Activated T-helper 2 cell treated with anti-CD3 and anti-CD28 coated beads, Interferon-gamma antibody, Interleukin-2, Interleukin-4, amounts not matched to agents 10 μg/mL and 5 μg/mL and 100 μg/mL, durations not matched to agents 14 hours and 24 hours and 36 hours (primary cell): ENCODE measurements at regions of chrX and their contacts with region 1.

Region 1: GRCh38 chrX:57286507-57287251 is at the start of gene FAAH2:
- DNase-seq: peak; percentile 20
- H3K4me3 Mint-ChIP-seq: peak within 1 kb of the TSS; percentile 83
- H3K27ac Mint-ChIP-seq: peak within 1 kb of the TSS; percentile 82
- H3K4me1 Mint-ChIP-seq: peaks cover 39% of the 10 kb centered on the region
- H3K27me3 Mint-ChIP-seq: no peaks in the 10 kb centered on the region
- total RNA-seq, gene FAAH2: 2.7 and 2.9 TPM in 2 replicates

Region 2: DNA sequence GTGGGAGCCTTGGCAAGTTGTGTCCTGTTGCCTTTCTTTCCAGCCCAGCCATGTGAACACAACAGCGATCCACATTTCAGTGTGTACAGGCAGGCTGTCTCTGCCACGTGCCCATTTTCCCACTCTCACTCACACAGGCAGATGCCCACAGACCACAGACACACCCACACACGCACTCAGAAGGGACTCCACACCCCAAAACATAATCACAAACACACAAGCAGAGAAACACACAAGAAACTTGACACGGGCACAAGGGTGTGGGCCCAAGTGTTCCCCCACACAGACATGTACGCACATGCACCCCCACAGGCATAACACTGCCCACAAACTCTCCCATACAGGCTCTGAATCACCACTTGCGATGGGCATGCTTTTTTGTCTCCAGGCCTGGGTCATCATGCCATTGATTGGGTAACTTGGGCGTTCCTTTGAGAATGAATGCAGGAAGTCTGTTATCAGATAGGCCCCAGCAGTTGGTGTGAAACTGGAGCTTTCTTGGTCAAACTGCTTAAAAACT is 473.3 kb before region 1 on chrX:
- intact Hi-C with region 1: loop called (anchors 2 kb)
- DNase-seq: peak; percentile 53
- H3K4me3 Mint-ChIP-seq: peak overlapping the region; percentile 75
- H3K27ac Mint-ChIP-seq: peak overlapping the region; percentile 96
- H3K4me1 Mint-ChIP-seq: peaks cover 29% of the 10 kb centered on the region
- H3K27me3 Mint-ChIP-seq: no peaks in the 10 kb centered on the region

Region 3: DNA sequence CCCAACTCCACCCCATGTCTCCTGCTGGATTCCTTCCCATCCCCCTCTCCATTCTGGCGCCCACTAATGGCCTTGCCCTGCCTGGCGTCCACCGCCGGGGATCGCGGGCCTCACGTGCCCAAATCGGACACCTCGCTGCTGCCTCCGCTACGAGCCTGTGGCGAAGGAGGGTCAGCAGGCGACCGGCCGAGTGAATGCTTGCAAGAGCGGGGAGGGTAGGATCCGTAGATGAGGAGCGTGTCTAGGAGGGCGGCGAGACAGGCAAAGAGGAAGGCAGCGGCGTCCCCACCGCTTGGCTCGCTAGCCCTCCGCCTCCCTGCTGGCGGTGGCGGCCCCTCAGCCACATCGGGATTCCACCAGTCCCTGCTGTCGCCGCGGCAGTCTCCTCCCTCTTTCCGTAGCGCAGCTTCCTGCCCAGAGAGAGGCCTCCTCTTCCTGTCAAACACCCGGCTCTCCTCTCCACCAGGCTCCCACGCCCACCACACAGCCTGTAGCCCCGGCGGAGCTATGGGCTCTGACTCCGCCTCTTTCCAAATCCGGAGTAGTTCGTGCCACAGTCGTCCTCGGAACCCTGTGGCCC is 165.4 kb before region 1 on chrX and contains the start of gene SPIN2B:
- intact Hi-C with region 1: loop called (anchors 1 kb)
- DNase-seq: peak; percentile 72
- H3K4me3 Mint-ChIP-seq: peak within 1 kb of the TSS; percentile 88
- H3K27ac Mint-ChIP-seq: peak within 1 kb of the TSS; percentile 84
- H3K4me1 Mint-ChIP-seq: peaks cover 7% of the 10 kb centered on the region
- H3K27me3 Mint-ChIP-seq: no peaks in the 10 kb centered on the region
- total RNA-seq, gene SPIN2B: 9.5 and 10.0 TPM in 2 replicates

Region 4: GRCh38 chrX:57313583-57314215 is 27.0 kb after region 1 on chrX:
- intact Hi-C with region 1: no loop called
- DNase-seq: no peak
- H3K4me3 Mint-ChIP-seq: no peak overlapping the region
- H3K27ac Mint-ChIP-seq: no peak overlapping the region
- H3K4me1 Mint-ChIP-seq: peaks cover 14% of the 10 kb centered on the region
- H3K27me3 Mint-ChIP-seq: no peaks in the 10 kb centered on the region

Region 5: DNA sequence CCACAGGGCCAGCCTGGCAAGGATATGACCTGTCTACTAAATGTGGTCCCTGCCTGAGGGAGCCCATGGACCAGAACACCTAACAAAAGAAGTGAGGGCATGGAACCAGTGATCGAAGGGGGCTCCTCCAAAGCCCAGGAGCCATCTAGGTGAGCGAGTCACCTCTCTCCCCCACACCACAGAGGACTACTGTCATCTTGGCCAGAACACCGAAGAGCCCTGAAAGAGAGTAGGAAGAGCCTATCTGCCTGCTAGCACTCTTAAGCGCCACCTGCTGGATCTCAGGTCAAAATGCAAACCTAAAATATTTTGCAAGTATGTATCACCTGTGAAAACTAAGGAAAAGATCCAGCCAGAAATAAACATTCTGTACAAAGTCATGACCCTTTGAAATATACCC is 167.2 kb after region 1 on chrX:
- intact Hi-C with region 1: loop called (anchors 2 kb)
- DNase-seq: no peak
- H3K4me3 Mint-ChIP-seq: no peak overlapping the region
- H3K27ac Mint-ChIP-seq: no peak overlapping the region
- H3K4me1 Mint-ChIP-seq: peaks cover 3% of the 10 kb centered on the region
- H3K27me3 Mint-ChIP-seq: no peaks in the 10 kb centered on the region

Region 6: DNA sequence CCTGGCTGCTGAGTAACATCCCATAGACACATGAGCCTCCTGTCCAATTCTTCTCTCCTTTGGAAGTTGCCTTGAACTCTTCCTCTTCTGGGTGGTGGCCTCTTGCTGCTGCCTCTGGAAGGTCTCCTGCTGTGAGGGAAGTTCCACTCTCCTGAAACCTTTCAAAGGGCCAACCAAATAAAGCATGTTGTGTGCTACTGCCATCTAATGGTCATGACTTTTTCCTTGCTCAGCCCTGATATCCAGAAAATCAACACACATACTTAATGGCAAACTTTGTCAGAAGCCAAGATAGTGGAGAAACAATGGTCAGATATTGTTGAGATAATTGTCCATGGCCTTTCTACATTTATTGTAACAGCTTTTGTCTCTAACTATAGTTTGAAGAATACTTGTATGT is 642.7 kb after region 1 on chrX:
- intact Hi-C with region 1: loop called (anchors 10 kb)
- DNase-seq: no peak
- H3K4me3 Mint-ChIP-seq: no peak overlapping the region
- H3K27ac Mint-ChIP-seq: no peak overlapping the region
- H3K4me1 Mint-ChIP-seq: peaks cover 2% of the 10 kb centered on the region
- H3K27me3 Mint-ChIP-seq: no peaks in the 10 kb centered on the region